ENCODE measurements at regions of chr12 and their contacts with region 1.

Region 1: GRCh38 chr12:2004113-2004929 is at the start of gene DCP1B:
- DNase-seq: peak; percentile 83 to 98 (median 92)
- ATAC-seq: peak; percentile 94
- H3K4me3 ChIP-seq: peak within 1 kb of the TSS; percentile 65 to 99
- H3K4me3 Mint-ChIP-seq: peak within 1 kb of the TSS; percentile 98
- H3K27ac ChIP-seq: peak within 1 kb of the TSS; percentile 71 to 92
- H3K27ac Mint-ChIP-seq: peak within 1 kb of the TSS; percentile 99
- H3K4me1 ChIP-seq: peaks cover 19% of the 10 kb centered on the region
- H3K4me1 Mint-ChIP-seq: peaks cover 37% of the 10 kb centered on the region
- H3K27me3 ChIP-seq: peaks cover 0 to 2% of the 10 kb centered on the region in 2 experiments
- H3K27me3 Mint-ChIP-seq: no peaks in the 10 kb centered on the region
- CTCF ChIP-seq: no peak
- total RNA-seq, gene DCP1B: 3.0 TPM

Region 2: DNA sequence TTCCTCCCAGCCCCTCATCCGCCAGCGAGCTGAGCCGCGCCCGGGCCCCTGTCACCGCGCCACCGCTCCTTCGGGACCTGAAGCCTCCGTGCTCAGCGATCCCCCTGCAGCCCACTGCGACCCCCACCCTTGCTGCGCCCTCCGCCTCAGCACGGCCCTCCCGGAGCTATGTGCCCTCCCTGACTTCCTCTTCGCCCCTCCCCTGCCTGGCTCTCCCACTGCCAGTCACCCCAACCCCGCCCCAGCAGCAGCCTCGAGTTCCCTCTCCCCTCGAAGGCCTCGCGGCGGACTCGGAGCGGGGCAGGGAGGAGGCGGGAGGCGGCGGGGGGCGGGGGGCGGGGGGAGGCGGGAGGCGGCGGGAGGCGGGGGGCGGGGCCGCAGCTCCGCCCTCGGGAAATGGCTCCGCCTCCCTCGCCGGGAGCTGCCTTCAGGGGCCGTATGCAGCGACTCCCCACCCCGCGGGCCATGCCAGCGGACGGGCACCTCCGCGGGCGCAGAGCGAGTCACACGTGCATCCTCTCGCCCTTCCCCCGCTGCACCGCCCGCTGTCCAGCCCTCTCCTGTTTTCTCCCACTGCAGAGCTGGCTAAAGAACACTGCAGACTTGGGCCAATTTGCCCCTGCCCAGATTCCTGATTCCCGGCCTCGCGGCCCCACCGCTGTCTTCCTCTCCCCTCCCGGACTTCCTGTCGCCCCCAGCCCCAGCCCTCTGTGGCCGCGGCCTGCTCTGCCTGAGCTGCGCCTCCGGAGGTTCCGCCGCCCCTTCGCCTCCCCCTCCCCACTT is 342.6 kb before region 1 on chr12:
- CTCF ChIA-PET with region 1: no interaction called
- POLR2A ChIA-PET with region 1: no interaction called
- intact Hi-C with region 1: loop called in 1 of 2 experiments (anchors 5 kb)
- DNase-seq: peak; percentile 63 to 95 (median 78)
- ATAC-seq: peak; percentile 74
- H3K4me3 ChIP-seq: peak overlapping the region; percentile 50 to 52
- H3K4me3 Mint-ChIP-seq: peak overlapping the region; percentile 78
- H3K27ac ChIP-seq: peak overlapping the region in 1 of 2 experiments; percentile 56
- H3K27ac Mint-ChIP-seq: peak overlapping the region; percentile 74
- H3K4me1 ChIP-seq: peaks cover 17% of the 10 kb centered on the region
- H3K4me1 Mint-ChIP-seq: peaks cover 43% of the 10 kb centered on the region
- H3K27me3 ChIP-seq: no peaks in the 10 kb centered on the region
- H3K27me3 Mint-ChIP-seq: no peaks in the 10 kb centered on the region
- CTCF ChIP-seq: no peak

Region 3: GRCh38 chr12:1804545-1805332 is 199.6 kb before region 1 on chr12:
- CTCF ChIA-PET with region 1: no interaction called
- POLR2A ChIA-PET with region 1: no interaction called
- intact Hi-C with region 1: loop called in 1 of 2 experiments (anchors 2 kb)
- DNase-seq: peak; percentile 69 to 93 (median 87)
- ATAC-seq: peak; percentile 97
- H3K4me3 ChIP-seq: no peak overlapping the region
- H3K4me3 Mint-ChIP-seq: no peak overlapping the region
- H3K27ac ChIP-seq: peak overlapping the region in 1 of 2 experiments; percentile 66
- H3K27ac Mint-ChIP-seq: peak overlapping the region; percentile 73
- H3K4me1 ChIP-seq: peaks cover 6% of the 10 kb centered on the region
- H3K4me1 Mint-ChIP-seq: peaks cover 10% of the 10 kb centered on the region
- H3K27me3 ChIP-seq: no peaks in the 10 kb centered on the region
- H3K27me3 Mint-ChIP-seq: no peaks in the 10 kb centered on the region
- CTCF ChIP-seq: no peak

Region 4: GRCh38 chr12:2034633-2035430 is 30.5 kb after region 1 on chr12:
- CTCF ChIA-PET with region 1: interaction called, 3 read pairs
- POLR2A ChIA-PET with region 1: no interaction called
- intact Hi-C with region 1: loop called (anchors 1 kb)
- DNase-seq: peak; percentile 72 to 91 (median 83)
- ATAC-seq: peak; percentile 99
- H3K4me3 ChIP-seq: peak overlapping the region; percentile 49 to 51
- H3K4me3 Mint-ChIP-seq: peak overlapping the region; percentile 66
- H3K27ac ChIP-seq: no peak overlapping the region
- H3K27ac Mint-ChIP-seq: no peak overlapping the region
- H3K4me1 ChIP-seq: peaks cover 12% of the 10 kb centered on the region
- H3K4me1 Mint-ChIP-seq: peaks cover 15% of the 10 kb centered on the region
- H3K27me3 ChIP-seq: no peaks in the 10 kb centered on the region
- H3K27me3 Mint-ChIP-seq: peaks cover 29% of the 10 kb centered on the region
- CTCF ChIP-seq: peak; percentile 88

Region 5: GRCh38 chr12:2890388-2891239 is 886.3 kb after region 1 on chr12 and contains the start of gene TULP3:
- CTCF ChIA-PET with region 1: no interaction called
- POLR2A ChIA-PET with region 1: no interaction called
- intact Hi-C with region 1: loop called (anchors 5 to 10 kb)
- DNase-seq: peak; percentile 97 to 99 (median 98)
- ATAC-seq: peak; percentile 94
- H3K4me3 ChIP-seq: peak within 1 kb of the TSS; percentile 98 to 99
- H3K4me3 Mint-ChIP-seq: peak within 1 kb of the TSS; percentile 98
- H3K27ac ChIP-seq: peak within 1 kb of the TSS; percentile 71 to 85
- H3K27ac Mint-ChIP-seq: peak within 1 kb of the TSS; percentile 95
- H3K4me1 ChIP-seq: peaks cover 16% of the 10 kb centered on the region
- H3K4me1 Mint-ChIP-seq: peaks cover 30% of the 10 kb centered on the region
- H3K27me3 ChIP-seq: no peaks in the 10 kb centered on the region
- H3K27me3 Mint-ChIP-seq: no peaks in the 10 kb centered on the region
- CTCF ChIP-seq: no peak
- total RNA-seq, gene TULP3: 2.7 to 3.0 TPM

Measured in CD8-positive, alpha-beta T cell (primary cell).